Panc1 (cell line): ENCODE measurements at regions of chr19 and their contacts with region 1.

Region 1: GRCh38 chr19:38583219-38583984 is 34.4 kb downstream of the MAP4K1 start:
- DNase-seq: no peak
- ATAC-seq: peak; percentile 62
- H3K4me3 ChIP-seq: no peak overlapping the region
- H3K27ac ChIP-seq: no peak overlapping the region
- H3K4me1 ChIP-seq: no peaks in the 10 kb centered on the region
- H3K27me3 ChIP-seq: no peaks in the 10 kb centered on the region
- CTCF ChIP-seq: no peak

Region 2: DNA sequence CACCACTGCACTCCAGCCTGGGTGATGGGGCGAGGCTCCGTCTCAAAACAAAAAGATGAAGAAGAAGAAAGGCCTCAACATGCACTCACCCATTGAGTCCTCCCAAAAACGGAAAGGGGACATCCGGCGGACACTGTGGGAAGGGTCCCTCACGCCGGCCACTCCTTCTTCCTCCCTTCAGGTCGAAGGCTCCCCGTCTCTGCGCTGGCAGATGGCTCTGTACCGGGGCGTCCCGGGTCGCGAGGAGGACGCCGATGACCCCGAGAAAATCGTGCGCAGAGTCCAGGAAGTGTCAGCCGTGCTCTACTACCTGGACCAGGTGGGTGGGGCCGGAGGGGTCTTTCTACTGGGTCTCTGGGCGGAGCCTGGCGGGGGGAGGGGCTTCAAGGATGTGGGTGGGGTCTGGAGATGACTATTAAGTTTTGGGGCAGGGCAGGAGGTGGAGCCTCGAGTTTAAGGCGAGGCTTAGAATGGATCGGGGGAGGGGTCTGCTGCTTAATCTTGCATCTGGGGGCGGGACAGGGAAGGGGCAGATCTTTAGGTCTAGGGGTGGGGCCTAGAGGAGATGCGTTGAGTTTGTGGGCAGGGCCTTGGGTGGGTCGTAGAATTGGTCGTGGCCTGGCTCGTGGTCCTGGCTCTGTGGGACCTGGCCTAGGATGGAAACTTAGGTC is 55.8 kb before region 1 on chr19:
- CTCF ChIA-PET with region 1: no interaction called
- POLR2A ChIA-PET with region 1: no interaction called
- in situ Hi-C with region 1: loop called (anchors 10 kb)
- intact Hi-C with region 1: no loop called
- DNase-seq: no peak
- ATAC-seq: peak; percentile 20
- H3K4me3 ChIP-seq: peak overlapping the region in 1 of 2 experiments; percentile 32; a peak in 2 of 4 replicates
- H3K27ac ChIP-seq: no peak overlapping the region
- H3K4me1 ChIP-seq: peaks cover 4% of the 10 kb centered on the region; the same call in 1 of the 2 replicates
- H3K27me3 ChIP-seq: no peaks in the 10 kb centered on the region
- CTCF ChIP-seq: no peak

Region 3: GRCh38 chr19:38559428-38560401 is 23.7 kb before region 1 on chr19:
- CTCF ChIA-PET with region 1: interaction called, 3 read pairs
- POLR2A ChIA-PET with region 1: interaction called, 11 read pairs
- in situ Hi-C with region 1: no loop called
- intact Hi-C with region 1: no loop called
- DNase-seq: no peak
- ATAC-seq: no peak
- H3K4me3 ChIP-seq: no peak overlapping the region
- H3K27ac ChIP-seq: no peak overlapping the region
- H3K4me1 ChIP-seq: 0 out of 2 replicates have a peak, but pooled peaks cover 2% of the 10 kb centered on the region
- H3K27me3 ChIP-seq: no peaks in the 10 kb centered on the region
- CTCF ChIP-seq: no peak

Region 4: GRCh38 chr19:38596057-38596981 is 12.9 kb after region 1 on chr19:
- CTCF ChIA-PET with region 1: interaction called, 3 read pairs
- POLR2A ChIA-PET with region 1: interaction called, 19 read pairs
- in situ Hi-C with region 1: no loop called
- intact Hi-C with region 1: no loop called
- DNase-seq: peak; percentile 76
- ATAC-seq: peak; percentile 89
- H3K4me3 ChIP-seq: peak overlapping the region; percentile 32 to 50
- H3K27ac ChIP-seq: no peak overlapping the region
- H3K4me1 ChIP-seq: no peaks in the 10 kb centered on the region
- H3K27me3 ChIP-seq: no peaks in the 10 kb centered on the region
- CTCF ChIP-seq: no peak

Region 5: DNA sequence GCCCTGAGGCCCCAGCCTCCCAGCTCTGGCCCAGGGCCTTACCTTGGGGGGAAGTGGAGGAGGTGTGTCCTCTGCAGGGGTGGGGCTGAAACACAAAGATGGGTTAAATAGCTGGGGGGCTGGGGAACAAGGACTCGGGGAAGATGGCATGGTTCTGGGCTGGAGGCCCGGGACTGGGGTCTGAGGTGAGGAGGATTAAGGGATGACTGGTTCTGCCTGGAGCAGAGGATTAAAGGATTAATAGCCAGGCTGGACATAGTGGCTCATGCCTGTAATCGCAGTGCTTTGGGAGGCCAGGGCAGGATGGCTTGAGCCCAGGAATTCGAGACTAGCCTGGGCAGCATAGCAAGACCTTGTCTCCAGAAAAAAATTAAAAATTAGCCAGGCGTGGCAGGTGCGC is 22.7 kb after region 1 on chr19:
- CTCF ChIA-PET with region 1: no interaction called
- POLR2A ChIA-PET with region 1: interaction called, 12 read pairs
- in situ Hi-C with region 1: no loop called
- intact Hi-C with region 1: no loop called
- DNase-seq: no peak
- ATAC-seq: peak; percentile 35
- H3K4me3 ChIP-seq: no peak overlapping the region
- H3K27ac ChIP-seq: no peak overlapping the region
- H3K4me1 ChIP-seq: no peaks in the 10 kb centered on the region
- H3K27me3 ChIP-seq: no peaks in the 10 kb centered on the region
- CTCF ChIP-seq: no peak

Region 6: GRCh38 chr19:38883286-38883685 is 299.9 kb after region 1 on chr19:
- CTCF ChIA-PET with region 1: no interaction called
- POLR2A ChIA-PET with region 1: interaction called, 10 read pairs
- in situ Hi-C with region 1: no loop called
- intact Hi-C with region 1: no loop called
- DNase-seq: no peak
- ATAC-seq: no peak
- H3K4me3 ChIP-seq: no peak overlapping the region
- H3K27ac ChIP-seq: no peak overlapping the region
- H3K4me1 ChIP-seq: peaks cover 1% of the 10 kb centered on the region; the same call in 1 of the 2 replicates
- H3K27me3 ChIP-seq: no peaks in the 10 kb centered on the region
- CTCF ChIP-seq: no peak

Region 7: GRCh38 chr19:39166571-39167391 is 583.4 kb after region 1 on chr19:
- CTCF ChIA-PET with region 1: interaction called, 10 read pairs
- POLR2A ChIA-PET with region 1: no interaction called
- in situ Hi-C with region 1: no loop called
- intact Hi-C with region 1: no loop called
- DNase-seq: no peak
- ATAC-seq: peak; percentile 65
- H3K4me3 ChIP-seq: no peak overlapping the region
- H3K27ac ChIP-seq: no peak overlapping the region
- H3K4me1 ChIP-seq: peaks cover 33% of the 10 kb centered on the region
- H3K27me3 ChIP-seq: no peaks in the 10 kb centered on the region
- CTCF ChIP-seq: no peak